ENCODE measurements at regions of chr18 and their contacts with region 1.

Region 1: DNA sequence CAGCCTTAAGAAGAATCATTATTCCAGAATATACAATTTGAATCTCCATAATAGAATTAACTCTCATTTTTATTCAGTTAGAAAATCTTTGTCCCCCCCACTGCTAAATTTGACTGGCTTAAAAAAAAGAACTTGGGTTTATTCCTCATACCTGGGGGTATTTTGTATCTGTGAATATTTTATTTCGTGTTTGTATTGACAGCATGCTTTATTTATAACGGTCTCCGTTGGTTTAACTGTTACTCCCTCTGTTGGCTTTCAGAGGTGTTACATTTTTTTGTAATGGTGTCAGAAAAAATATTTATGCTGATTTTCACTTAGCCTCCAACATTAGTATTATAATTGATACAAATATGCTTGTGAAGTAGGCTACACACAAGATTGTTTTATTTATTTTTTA is 109.1 kb downstream of the HAUS1 start:
- DNase-seq: peak in 4 of 5 donors; percentile 35 to 54 (median 40)
- H3K4me3 ChIP-seq: no peak overlapping the region
- H3K4me3 Mint-ChIP-seq: peak overlapping the region in 6 of 8 donors; percentile 50 to 75 (median 58)
- H3K27ac ChIP-seq: no peak overlapping the region
- H3K27ac Mint-ChIP-seq: peak overlapping the region in 5 of 7 donors; percentile 37 to 81 (median 65)
- H3K4me1 ChIP-seq: peaks cover 73% of the 10 kb centered on the region
- H3K4me1 Mint-ChIP-seq: peaks cover 55 to 96% (median 80%) of the 10 kb centered on the region in 4 donors
- H3K27me3 ChIP-seq: no peaks in the 10 kb centered on the region
- H3K27me3 Mint-ChIP-seq: no peaks in the 10 kb centered on the region

Region 2: DNA sequence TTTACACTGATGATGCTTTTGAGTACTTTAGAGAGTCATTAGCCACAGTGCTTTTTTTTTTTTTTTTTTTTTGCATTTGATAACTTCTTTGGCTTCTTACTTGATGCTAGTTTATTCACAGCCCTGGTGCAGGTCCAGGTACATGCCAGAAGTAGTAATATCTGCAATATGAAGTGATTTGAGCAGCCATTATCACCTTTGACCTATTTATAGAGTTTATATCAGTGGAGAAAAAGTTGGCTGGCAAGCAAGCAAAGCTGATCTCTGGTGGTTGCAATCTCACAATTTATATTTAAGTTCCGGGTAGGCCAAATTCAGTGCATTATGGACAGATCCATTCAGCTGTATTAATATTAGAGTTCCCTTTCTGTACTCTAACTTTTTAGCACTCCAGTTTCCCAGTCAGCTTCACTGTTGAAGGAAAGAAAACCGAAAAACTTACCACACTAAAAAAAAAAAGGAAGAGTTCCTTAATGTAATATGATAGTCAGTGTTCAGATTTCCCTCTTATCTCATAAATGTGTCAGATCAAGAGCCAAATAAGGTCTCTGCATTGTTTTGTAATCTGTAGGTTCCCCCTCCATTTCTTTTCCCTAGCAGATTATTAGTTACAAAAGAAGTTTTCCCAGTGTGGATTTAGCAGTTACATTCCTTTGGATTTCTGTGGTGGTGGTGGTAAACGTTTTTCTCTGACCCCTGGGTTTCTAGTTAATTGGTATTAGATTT is 30.5 kb before region 1 on chr18:
- CTCF ChIA-PET with region 1: interaction called, 10 read pairs
- POLR2A ChIA-PET with region 1: interaction called, 3 read pairs
- intact Hi-C with region 1: no loop called
- DNase-seq: no peak
- H3K4me3 ChIP-seq: no peak overlapping the region
- H3K4me3 Mint-ChIP-seq: peak overlapping the region in 6 of 8 donors; percentile 13 to 53 (median 49)
- H3K27ac ChIP-seq: no peak overlapping the region
- H3K27ac Mint-ChIP-seq: peak overlapping the region; percentile 23 to 73 (median 55)
- H3K4me1 ChIP-seq: peaks cover 78% of the 10 kb centered on the region
- H3K4me1 Mint-ChIP-seq: peaks cover 42 to 77% (median 60%) of the 10 kb centered on the region in 4 donors
- H3K27me3 ChIP-seq: no peaks in the 10 kb centered on the region
- H3K27me3 Mint-ChIP-seq: no peaks in the 10 kb centered on the region

Region 3: GRCh38 chr18:46199515-46200147 is 13.7 kb before region 1 on chr18:
- CTCF ChIA-PET with region 1: interaction called, 12 read pairs
- POLR2A ChIA-PET with region 1: interaction called, 3 read pairs
- intact Hi-C with region 1: no loop called
- DNase-seq: no peak
- H3K4me3 ChIP-seq: no peak overlapping the region
- H3K4me3 Mint-ChIP-seq: peak overlapping the region in 5 of 8 donors; percentile 2 to 35 (median 27)
- H3K27ac ChIP-seq: no peak overlapping the region
- H3K27ac Mint-ChIP-seq: peak overlapping the region; percentile 37 to 71 (median 44)
- H3K4me1 ChIP-seq: peaks cover 68% of the 10 kb centered on the region
- H3K4me1 Mint-ChIP-seq: peaks cover 47 to 78% (median 62%) of the 10 kb centered on the region in 4 donors
- H3K27me3 ChIP-seq: no peaks in the 10 kb centered on the region
- H3K27me3 Mint-ChIP-seq: no peaks in the 10 kb centered on the region

Measured in CD4-positive, alpha-beta memory T cell (primary cell).